MCF 10A (cell line): ENCODE measurements at regions of chr2 and their contacts with region 1.

Region 1: DNA sequence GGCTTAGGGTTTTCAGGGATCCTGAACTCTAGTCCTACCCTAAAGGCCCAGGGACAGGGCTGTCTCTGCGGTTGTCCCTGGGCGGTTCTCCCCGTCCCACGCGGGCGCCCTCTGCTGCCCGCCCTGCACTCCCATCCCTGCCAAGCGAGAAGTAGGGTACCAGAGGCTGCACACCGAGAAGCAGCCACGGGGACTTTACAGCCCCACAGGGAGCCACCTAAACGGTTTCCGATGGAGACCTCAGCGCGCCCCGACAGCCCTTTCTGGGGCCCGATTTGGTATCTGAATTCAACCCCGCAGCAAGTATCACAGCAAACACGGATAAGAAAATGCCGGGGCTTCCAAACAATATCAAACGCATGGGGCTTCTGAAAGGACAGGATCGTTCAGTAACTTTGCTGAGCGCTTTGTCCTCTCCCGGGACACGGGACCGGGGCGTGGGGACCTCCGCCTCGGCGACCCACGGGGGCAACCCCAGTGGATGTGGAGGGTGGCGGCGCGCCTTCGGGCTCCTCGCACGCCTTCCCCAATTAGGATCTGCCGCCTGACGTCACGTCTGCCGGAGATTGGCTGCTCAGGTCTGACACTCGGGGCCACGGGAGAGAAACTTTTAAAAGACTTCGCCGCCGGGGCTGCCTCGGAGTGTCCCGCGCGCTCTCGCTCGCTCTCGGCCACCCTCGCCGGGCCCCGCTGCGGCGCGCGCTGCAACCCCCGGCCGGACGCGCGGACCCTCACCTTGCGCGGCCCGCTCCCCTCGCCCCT is at the start of gene LTBP1:
- DNase-seq: peak; percentile 65
- H3K4me3 Mint-ChIP-seq: peak within 1 kb of the TSS; percentile 70
- H3K27ac Mint-ChIP-seq: no peak within 1 kb of the TSS
- H3K4me1 Mint-ChIP-seq: no peaks in the 10 kb centered on the region
- H3K27me3 Mint-ChIP-seq: no peaks in the 10 kb centered on the region
- CTCF ChIP-seq: peak; percentile 71
- total RNA-seq, gene LTBP1: 99.0 and 119 TPM in 2 replicates

Region 2: DNA sequence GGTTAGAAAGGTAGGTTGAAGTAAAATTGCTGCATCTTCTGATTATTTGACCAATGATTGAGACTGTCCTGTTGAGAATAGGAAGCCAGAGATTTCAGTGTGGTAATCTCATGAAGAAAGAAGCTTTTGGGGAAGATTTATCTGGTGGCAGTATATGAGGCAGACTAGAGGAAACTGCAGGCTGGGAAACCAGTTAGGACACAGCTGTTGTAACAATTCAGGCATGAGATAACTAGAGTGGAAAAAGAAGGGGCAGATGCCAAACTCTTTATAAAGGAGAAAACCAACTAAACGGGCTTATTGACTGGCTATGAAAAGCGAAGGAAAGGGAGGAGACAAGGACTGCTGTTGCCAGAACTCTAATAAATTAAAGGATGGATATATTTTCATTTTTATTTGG is 163.0 kb before region 1 on chr2:
- CTCF ChIA-PET with region 1: no interaction called
- POLR2A ChIA-PET with region 1: no interaction called
- intact Hi-C with region 1: no loop called
- DNase-seq: no peak
- H3K4me3 Mint-ChIP-seq: no peak overlapping the region
- H3K27ac Mint-ChIP-seq: no peak overlapping the region
- H3K4me1 Mint-ChIP-seq: no peaks in the 10 kb centered on the region
- H3K27me3 Mint-ChIP-seq: no peaks in the 10 kb centered on the region
- CTCF ChIP-seq: no peak

Region 3: DNA sequence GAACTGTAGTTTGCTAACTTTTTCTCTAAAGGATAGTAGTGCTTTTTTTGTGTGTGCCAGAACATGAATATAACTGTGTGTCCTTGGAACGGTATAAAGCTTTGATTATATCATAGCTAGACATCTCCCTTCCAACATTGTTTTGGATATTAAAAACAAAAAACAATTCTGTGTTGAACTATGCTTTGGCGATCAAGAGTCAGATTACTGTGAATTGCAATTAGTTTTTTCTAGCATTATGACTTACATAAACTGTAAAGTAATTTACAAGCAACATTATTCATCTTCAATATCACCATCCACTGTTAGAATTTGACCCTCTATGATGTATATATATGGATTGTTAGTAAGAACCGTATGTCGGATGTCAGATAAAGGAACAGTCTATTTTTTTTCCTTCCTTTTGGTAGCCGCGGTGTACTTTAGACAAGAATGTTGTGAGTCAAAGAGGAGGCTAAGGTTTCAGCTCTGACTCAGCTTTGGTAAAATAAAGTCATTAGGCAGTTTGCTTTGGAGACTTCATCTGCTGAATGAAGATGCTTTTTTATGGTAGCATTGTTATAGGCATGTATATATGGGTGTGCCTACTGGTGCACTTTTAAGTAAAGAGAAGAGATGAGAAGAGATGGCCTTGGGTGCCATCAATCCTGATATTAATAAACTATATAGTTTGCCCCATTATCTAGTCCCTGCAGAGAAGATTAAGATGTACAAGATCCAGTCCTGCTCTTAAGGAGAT is 76.7 kb after region 1 on chr2:
- CTCF ChIA-PET with region 1: no interaction called
- POLR2A ChIA-PET with region 1: no interaction called
- intact Hi-C with region 1: loop called (anchors 2 kb)
- DNase-seq: peak; percentile 59
- H3K4me3 Mint-ChIP-seq: no peak overlapping the region
- H3K27ac Mint-ChIP-seq: no peak overlapping the region
- H3K4me1 Mint-ChIP-seq: peaks cover 6% of the 10 kb centered on the region
- H3K27me3 Mint-ChIP-seq: no peaks in the 10 kb centered on the region
- CTCF ChIP-seq: no peak

Region 4: GRCh38 chr2:33047939-33048338 is 101.4 kb after region 1 on chr2:
- CTCF ChIA-PET with region 1: no interaction called
- POLR2A ChIA-PET with region 1: no interaction called
- intact Hi-C with region 1: no loop called
- DNase-seq: no peak
- H3K4me3 Mint-ChIP-seq: no peak overlapping the region
- H3K27ac Mint-ChIP-seq: no peak overlapping the region
- H3K4me1 Mint-ChIP-seq: no peaks in the 10 kb centered on the region
- H3K27me3 Mint-ChIP-seq: no peaks in the 10 kb centered on the region
- CTCF ChIP-seq: no peak

Region 5: DNA sequence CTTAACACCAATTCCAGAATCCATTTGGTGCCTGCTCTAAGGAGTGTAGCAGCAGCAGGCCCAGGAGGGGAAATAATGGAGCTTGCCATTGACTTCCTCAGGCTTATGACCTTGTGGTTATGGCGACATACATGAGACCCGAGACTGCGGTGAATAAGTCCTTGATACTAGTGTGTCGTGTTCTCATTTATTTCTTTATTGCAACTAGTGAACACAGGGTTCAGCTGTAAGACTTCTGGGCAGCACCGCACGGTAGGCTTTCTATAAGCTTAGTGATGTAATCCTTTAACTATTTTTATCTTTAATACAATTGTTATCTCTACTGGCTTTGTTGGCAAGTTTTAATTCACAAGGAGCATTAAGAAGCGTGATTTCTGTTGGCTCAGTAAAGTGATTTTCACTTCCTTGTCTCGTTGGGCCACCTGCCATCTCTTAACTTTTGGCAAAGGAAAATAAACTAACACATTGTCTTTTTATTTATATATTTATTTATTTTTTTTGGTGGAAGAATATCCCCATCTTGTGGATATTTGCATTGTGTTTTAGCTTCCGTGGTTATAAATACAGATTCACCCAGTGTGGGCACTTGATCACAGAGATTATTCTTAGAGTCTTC is 140.0 kb after region 1 on chr2:
- CTCF ChIA-PET with region 1: interaction called, 11 read pairs
- POLR2A ChIA-PET with region 1: no interaction called
- intact Hi-C with region 1: no loop called
- DNase-seq: no peak
- H3K4me3 Mint-ChIP-seq: no peak overlapping the region
- H3K27ac Mint-ChIP-seq: no peak overlapping the region
- H3K4me1 Mint-ChIP-seq: peaks cover 10% of the 10 kb centered on the region
- H3K27me3 Mint-ChIP-seq: no peaks in the 10 kb centered on the region
- CTCF ChIP-seq: peak; percentile 20